ENCODE measurements at regions of chr1 and their contacts with region 1.

Region 1: DNA sequence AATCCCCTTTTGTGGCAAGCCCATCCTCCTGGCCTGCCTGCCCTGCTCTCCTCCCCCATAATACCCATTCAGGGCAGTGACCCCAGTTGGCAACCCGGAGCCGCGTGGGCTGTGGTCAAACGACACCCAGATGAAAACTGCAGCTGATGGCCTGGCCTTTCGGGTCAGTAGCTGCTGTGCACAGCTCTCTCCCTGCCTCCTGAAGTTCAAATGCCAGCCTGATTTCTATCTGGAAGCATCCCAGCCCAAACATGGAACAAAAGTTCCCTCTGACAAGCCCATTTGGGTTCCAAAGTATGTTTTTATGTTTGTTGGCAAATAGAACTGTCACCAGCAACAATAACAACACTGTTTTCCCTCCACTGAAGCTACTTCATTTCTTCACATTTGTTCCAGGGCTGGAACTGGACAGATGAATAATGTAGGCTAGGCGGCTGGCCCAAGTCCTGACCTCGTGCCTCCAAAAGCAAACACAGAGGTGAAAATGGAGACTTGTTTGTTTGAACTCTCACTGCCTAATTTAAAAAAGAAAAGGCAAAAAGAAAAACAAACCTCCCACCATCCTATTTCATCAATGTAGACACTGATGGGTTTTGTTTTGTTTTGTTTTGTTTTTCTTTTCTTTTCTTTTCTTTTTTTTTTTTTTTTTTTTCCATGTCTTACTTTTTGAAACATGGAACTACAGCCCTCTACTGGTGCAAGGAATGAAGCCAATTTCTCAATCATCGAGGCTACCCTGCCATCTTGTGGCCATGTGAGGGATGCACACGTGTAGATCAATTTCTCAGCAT is 179.0 kb downstream of the ADSS2 start:
- DNase-seq: no peak
- H3K4me3 ChIP-seq: no peak overlapping the region
- H3K27ac ChIP-seq: peak overlapping the region in 1 of 8 donors; percentile 53
- H3K4me1 ChIP-seq: peaks cover 0 to 26% (median 7%) of the 10 kb centered on the region in 6 donors
- H3K27me3 ChIP-seq: no peaks in the 10 kb centered on the region
- CTCF ChIP-seq: peak; percentile 84 to 100 (median 91)
- POLR2A ChIP-seq: no peak

Region 2: DNA sequence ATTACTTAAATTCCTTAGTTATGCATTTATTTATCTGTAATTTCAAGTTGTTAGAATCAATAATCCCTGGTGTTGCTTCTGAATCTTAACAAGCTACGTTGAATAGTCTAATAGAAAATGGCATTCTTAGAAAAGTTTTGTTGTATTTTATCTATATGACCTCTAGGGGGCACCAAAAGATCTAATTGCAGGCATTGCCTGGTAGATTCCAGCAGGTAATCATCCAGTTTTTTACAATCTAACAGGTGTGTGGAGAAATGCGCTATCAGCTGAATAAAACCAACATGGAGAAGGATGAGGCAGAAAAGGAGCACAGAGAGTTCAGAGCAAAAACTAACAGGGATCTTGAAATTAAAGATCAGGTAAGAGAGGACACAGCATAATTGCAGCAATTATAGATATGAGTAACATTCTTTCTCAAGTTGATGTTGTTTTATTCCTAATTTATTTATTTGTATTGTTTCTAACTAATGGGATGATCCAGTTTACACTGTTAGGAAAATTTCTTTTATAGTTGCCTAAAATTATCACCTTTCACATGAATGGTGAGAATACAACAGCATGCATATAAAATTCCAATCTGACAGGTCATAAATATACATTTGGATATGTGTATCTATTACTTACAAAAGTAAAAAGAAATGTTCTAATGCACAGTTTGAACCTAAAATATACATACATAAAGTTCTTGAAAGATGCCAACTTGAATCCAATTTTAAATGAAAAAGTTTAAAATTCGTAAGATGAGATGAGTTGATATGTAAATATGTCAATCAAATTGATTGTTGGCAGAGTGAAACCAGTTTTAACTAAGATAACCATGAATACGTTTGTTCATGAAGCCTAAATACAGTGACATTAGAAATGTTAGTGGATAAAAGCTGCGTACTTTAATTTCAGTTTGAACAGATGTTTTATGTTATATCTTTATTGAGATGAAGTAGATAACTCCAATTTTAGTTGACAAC is 928.4 kb before region 1 on chr1:
- intact Hi-C with region 1: loop called (anchors 2 kb)
- DNase-seq: no peak
- H3K4me3 ChIP-seq: no peak overlapping the region
- H3K27ac ChIP-seq: peak overlapping the region in 2 of 8 donors; percentile 23 to 24
- H3K4me1 ChIP-seq: peaks cover 0 to 16% (median 6%) of the 10 kb centered on the region in 6 donors
- H3K27me3 ChIP-seq: no peaks in the 10 kb centered on the region
- CTCF ChIP-seq: peak; percentile 19 to 73 (median 55)
- POLR2A ChIP-seq: no peak

Region 3: DNA sequence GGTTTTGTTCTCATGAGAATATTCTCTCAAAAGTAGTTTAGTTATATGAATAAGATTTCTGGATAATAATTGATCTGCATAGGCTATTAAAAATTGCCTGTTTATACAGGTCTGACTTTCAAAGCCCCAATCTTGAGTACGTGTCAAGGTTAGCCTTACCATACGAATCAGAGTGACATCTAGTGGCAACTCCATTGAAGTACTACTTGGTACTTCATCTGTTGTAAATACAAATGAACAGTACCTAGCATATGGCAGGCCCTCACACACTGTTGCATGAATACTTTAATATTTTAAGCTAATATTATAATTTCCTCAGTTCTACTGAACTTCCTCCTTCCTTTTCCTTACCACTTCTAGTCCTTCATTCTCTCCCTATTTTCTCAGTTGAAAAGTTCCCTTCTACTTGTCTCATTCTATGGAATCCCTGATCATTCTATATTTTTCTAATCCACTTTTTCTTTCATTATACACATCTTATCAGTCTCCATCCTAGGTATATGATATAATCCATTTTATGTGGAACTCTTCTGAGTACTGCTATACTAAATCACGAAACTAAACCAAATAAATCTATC is 523.9 kb before region 1 on chr1:
- intact Hi-C with region 1: loop called (anchors 10 kb)
- DNase-seq: no peak
- H3K4me3 ChIP-seq: no peak overlapping the region
- H3K27ac ChIP-seq: peak overlapping the region in 1 of 8 donors; percentile 10
- H3K4me1 ChIP-seq: peaks cover 0 to 24% (median 6%) of the 10 kb centered on the region in 6 donors
- H3K27me3 ChIP-seq: no peaks in the 10 kb centered on the region
- CTCF ChIP-seq: peak; percentile 46 to 87 (median 76)
- POLR2A ChIP-seq: no peak

Region 4: DNA sequence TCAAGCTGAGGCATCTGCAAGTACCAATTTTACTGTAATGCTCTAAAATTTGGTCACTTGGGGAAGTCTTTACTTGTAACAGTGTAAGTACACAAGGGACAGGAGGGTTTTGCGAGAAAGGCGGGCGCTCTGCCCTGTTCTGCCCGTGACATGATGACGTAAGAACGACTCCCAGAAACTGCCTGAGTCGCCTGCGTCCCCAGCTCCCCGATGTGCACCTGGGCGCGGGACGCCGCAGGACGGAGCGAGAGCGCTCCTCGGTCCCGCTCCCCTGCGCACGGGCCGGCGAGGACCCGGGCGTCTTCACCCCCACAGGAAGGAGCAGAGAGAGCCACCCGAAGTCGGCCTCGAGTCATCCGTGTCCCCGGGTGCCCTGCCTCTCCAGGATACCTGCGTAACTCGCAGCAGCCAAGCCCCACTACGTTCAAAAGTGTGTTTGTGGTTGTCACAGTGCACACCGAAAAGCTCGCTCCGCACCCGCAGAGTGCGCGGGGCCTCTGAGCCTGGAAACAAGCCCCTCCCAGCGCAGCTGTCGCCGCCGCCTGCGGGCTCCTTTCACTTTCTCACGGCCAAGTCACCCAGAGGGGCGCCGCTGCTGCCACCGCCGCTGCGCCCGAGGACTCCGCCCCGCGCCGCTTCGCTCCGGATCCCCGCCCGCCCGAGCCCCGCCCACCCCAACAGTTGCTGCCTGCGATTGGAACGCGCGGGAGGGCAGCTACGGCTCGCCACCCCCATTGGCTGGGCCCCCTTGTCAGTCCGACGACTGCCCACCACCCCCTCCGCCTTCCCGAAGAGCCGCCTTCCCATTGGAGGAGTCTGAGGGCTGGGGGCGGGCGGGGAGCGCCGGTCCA is 224.8 kb before region 1 on chr1:
- intact Hi-C with region 1: loop called (anchors 10 kb)
- DNase-seq: peak; percentile 100
- H3K4me3 ChIP-seq: peak overlapping the region; percentile 51 to 88 (median 69)
- H3K27ac ChIP-seq: peak overlapping the region; percentile 97 to 100 (median 100)
- H3K4me1 ChIP-seq: peaks cover 22 to 50% (median 41%) of the 10 kb centered on the region in 6 donors
- H3K27me3 ChIP-seq: no peaks in the 10 kb centered on the region
- CTCF ChIP-seq: peak in 2 of 11 experiments; percentile 24 to 47
- POLR2A ChIP-seq: peak; percentile 90 to 97 (median 90)

Measured in spleen (tissue), 13 donors.